ENCODE measurements at regions of chr1 and their contacts with region 1.

Region 1: DNA sequence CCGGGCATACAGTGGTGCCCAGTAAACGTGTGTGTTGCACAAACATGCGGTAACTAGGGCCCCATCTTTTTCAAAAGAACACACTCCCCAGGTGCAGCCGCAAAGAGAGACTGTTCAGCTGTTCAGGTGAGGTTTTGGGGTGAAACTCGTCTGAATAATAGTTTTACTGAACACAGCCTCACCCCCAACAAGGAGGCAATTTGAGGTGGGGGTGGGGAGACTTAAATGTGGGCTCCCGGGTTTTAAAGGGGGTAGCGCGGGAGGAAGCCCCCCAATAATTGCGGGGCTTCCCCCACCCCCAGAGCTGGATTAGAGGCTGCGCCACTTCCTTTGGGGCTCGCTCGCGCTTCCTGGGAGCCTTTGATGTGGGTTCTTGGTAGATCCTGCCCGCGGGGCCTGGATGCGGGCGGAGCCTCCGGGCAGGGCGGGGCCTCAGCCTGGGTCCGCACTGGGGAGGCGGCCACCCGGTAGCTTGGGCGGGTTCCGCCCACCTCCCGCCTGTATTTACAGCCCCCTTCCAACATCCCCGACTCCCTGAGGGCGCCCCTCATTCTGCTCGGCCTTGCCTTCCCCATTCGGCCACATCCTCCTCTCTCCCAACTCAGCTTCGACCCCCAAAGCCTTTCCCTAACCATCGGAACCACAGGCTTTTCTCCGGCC is 6.4 kb upstream of the EPHA2 start:
- DNase-seq: peak; percentile 40 to 75 (median 71)
- ATAC-seq: peak; percentile 78
- H3K4me3 ChIP-seq: peak overlapping the region; percentile 55
- H3K4me3 Mint-ChIP-seq: peak overlapping the region; percentile 65 to 91 (median 82)
- H3K27ac ChIP-seq: peak overlapping the region; percentile 67
- H3K27ac Mint-ChIP-seq: peak overlapping the region; percentile 20 to 96 (median 87)
- H3K4me1 ChIP-seq: peaks cover 31 to 51% of the 10 kb centered on the region in 2 donors
- H3K4me1 Mint-ChIP-seq: peaks cover 52 to 96% (median 76%) of the 10 kb centered on the region in 7 donors
- H3K27me3 ChIP-seq: no peaks in the 10 kb centered on the region
- H3K27me3 Mint-ChIP-seq: peaks cover 0 to 59% (median 0%) of the 10 kb centered on the region in 5 donors

Region 2: DNA sequence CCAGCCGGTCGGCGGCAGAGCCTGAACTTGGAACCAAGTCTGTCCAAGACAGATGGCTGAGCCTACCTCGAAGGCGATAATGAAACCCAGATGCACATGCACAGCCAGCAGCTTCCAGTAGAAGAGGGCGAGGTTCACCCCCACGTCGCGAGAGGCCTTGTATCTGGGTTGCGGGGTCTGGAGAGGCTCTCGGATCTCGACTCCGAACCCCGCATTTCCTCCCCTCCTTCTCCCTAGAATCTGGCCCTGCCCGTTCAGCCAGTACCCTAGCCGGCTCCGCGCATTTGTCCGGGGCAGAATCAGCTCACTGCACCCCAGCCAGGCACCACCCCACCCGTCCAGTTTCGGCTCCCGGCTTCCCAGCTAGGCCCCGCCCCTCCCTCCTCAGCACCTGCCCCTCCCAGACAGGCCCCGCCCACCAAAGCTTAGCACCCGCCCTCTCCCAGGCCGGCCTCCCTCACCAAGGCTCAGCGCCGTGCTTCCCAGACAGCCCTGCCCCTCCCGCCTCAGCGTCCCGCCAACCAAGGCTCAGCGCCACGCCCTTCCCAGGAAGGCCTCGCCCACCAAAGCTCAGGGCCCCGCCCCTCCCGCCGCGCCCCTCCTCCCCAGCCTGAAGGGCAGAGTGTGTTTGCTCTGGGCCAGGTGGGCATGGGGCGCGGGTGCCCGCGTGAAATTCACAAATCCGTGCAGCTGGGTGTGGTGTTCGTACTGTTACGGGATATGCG is 54.9 kb after region 1 on chr1:
- CTCF ChIA-PET with region 1: no interaction called
- POLR2A ChIA-PET with region 1: interaction called, 3 read pairs
- intact Hi-C with region 1: loop called in 1 of 2 experiments (anchors 2 kb)
- DNase-seq: peak; percentile 80 to 94 (median 89)
- ATAC-seq: peak; percentile 99
- H3K4me3 ChIP-seq: peak overlapping the region; percentile 67
- H3K4me3 Mint-ChIP-seq: peak overlapping the region; percentile 81 to 91 (median 88)
- H3K27ac ChIP-seq: peak overlapping the region; percentile 54
- H3K27ac Mint-ChIP-seq: peak overlapping the region in 8 of 9 donors; percentile 33 to 82 (median 68)
- H3K4me1 ChIP-seq: peaks cover 0 to 6% of the 10 kb centered on the region in 2 donors
- H3K4me1 Mint-ChIP-seq: peaks cover 9 to 30% (median 23%) of the 10 kb centered on the region in 7 donors
- H3K27me3 ChIP-seq: no peaks in the 10 kb centered on the region
- H3K27me3 Mint-ChIP-seq: peaks cover 0 to 11% (median 0%) of the 10 kb centered on the region in 5 donors